Gastrocnemius medialis (tissue), 4 donors: ENCODE measurements at regions of chr15 and their contacts with region 1.

Region 1: DNA sequence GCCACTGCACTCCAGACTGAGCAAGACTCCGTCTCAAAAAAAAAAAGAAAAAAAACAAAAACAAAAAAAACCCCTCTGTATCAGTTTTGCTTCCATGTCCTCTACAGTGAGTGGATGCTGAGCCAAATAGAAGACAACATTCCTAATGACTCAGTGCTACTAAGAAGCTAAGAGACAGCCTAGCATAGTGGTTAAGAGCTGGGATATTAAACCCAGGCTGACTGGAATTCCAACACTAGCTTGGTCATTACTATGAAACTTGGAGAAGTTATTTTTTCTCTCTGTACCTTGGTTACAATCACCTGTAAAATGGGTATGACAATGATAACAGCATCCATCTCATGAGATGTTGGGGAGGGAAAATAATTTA is 60.9 kb upstream of the PYGO1 start:
- DNase-seq: no peak
- ATAC-seq: no peak
- H3K4me3 ChIP-seq: no peak overlapping the region
- H3K27ac ChIP-seq: no peak overlapping the region
- H3K4me1 ChIP-seq: no peaks in the 10 kb centered on the region
- H3K27me3 ChIP-seq: no peaks in the 10 kb centered on the region
- CTCF ChIP-seq: no peak
- POLR2A ChIP-seq: no peak

Region 2: GRCh38 chr15:55434989-55435825 is 213.8 kb before region 1 on chr15:
- in situ Hi-C with region 1: no loop called
- intact Hi-C with region 1: no loop called
- DNase-seq: no peak
- ATAC-seq: peak; percentile 58 to 81
- H3K4me3 ChIP-seq: no peak overlapping the region
- H3K27ac ChIP-seq: no peak overlapping the region
- H3K4me1 ChIP-seq: no peaks in the 10 kb centered on the region
- H3K27me3 ChIP-seq: no peaks in the 10 kb centered on the region
- CTCF ChIP-seq: peak in 4 of 5 experiments; percentile 29 to 56 (median 33)
- POLR2A ChIP-seq: no peak

Region 3: DNA sequence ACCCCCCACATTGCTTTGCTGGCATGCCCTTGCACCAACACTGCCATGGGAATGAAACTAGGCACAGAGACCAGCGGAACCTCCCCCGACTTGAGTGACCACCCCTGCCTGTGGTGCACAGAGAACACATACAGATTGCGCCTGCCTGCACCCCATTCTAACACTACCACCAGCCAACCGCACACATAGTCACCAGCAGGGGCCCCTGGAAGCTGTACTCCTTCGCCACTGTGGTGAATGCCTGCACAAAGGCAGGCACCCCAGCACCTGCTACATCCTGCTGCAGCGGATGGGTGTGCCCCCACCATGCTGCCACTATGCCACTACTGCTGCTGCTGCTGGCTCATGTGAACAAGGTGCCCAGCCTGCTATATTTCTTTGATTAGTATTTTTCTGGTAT is 113.6 kb before region 1 on chr15:
- in situ Hi-C with region 1: no loop called
- intact Hi-C with region 1: no loop called
- DNase-seq: no peak
- ATAC-seq: no peak
- H3K4me3 ChIP-seq: no peak overlapping the region
- H3K27ac ChIP-seq: no peak overlapping the region
- H3K4me1 ChIP-seq: peaks cover 0 to 9% of the 10 kb centered on the region in 2 donors
- H3K27me3 ChIP-seq: no peaks in the 10 kb centered on the region
- CTCF ChIP-seq: no peak
- POLR2A ChIP-seq: no peak

Region 4: GRCh38 chr15:55588070-55588814 is 60.8 kb before region 1 on chr15 and contains the start of gene PYGO1:
- in situ Hi-C with region 1: no loop called
- intact Hi-C with region 1: no loop called
- DNase-seq: peak; percentile 24 to 54
- ATAC-seq: peak; percentile 73 to 82
- H3K4me3 ChIP-seq: peak within 1 kb of the TSS; percentile 65 to 76 (median 70)
- H3K27ac ChIP-seq: peak within 1 kb of the TSS; percentile 88 to 93 (median 92)
- H3K4me1 ChIP-seq: peaks cover 3 to 23% of the 10 kb centered on the region in 2 donors
- H3K27me3 ChIP-seq: no peaks in the 10 kb centered on the region
- CTCF ChIP-seq: peak in 1 of 5 experiments; percentile 10
- POLR2A ChIP-seq: peak; percentile 41 to 78
- total RNA-seq, gene PYGO1: 26.7 to 39.1 (median 32.3) TPM

Region 5: GRCh38 chr15:55846116-55846707 is 197.2 kb after region 1 on chr15:
- in situ Hi-C with region 1: no loop called
- intact Hi-C with region 1: loop called (anchors 1 kb)
- DNase-seq: no peak
- ATAC-seq: peak; percentile 55 to 59
- H3K4me3 ChIP-seq: no peak overlapping the region
- H3K27ac ChIP-seq: peak overlapping the region in 1 of 4 donors; percentile 59
- H3K4me1 ChIP-seq: no peaks in the 10 kb centered on the region
- H3K27me3 ChIP-seq: no peaks in the 10 kb centered on the region
- CTCF ChIP-seq: peak; percentile 63 to 84 (median 78)
- POLR2A ChIP-seq: no peak

Region 6: GRCh38 chr15:56052395-56053045 is 403.5 kb after region 1 on chr15:
- in situ Hi-C with region 1: loop called in 2 of 4 experiments (anchors 10 kb)
- intact Hi-C with region 1: loop called (anchors 1 kb)
- DNase-seq: no peak
- ATAC-seq: peak; percentile 52 to 69
- H3K4me3 ChIP-seq: no peak overlapping the region
- H3K27ac ChIP-seq: no peak overlapping the region
- H3K4me1 ChIP-seq: no peaks in the 10 kb centered on the region
- H3K27me3 ChIP-seq: no peaks in the 10 kb centered on the region
- CTCF ChIP-seq: peak; percentile 49 to 84 (median 60)
- POLR2A ChIP-seq: no peak